OCI-LY7 (cell line): ENCODE measurements at regions of chr19 and their contacts with region 1.

Region 1: DNA sequence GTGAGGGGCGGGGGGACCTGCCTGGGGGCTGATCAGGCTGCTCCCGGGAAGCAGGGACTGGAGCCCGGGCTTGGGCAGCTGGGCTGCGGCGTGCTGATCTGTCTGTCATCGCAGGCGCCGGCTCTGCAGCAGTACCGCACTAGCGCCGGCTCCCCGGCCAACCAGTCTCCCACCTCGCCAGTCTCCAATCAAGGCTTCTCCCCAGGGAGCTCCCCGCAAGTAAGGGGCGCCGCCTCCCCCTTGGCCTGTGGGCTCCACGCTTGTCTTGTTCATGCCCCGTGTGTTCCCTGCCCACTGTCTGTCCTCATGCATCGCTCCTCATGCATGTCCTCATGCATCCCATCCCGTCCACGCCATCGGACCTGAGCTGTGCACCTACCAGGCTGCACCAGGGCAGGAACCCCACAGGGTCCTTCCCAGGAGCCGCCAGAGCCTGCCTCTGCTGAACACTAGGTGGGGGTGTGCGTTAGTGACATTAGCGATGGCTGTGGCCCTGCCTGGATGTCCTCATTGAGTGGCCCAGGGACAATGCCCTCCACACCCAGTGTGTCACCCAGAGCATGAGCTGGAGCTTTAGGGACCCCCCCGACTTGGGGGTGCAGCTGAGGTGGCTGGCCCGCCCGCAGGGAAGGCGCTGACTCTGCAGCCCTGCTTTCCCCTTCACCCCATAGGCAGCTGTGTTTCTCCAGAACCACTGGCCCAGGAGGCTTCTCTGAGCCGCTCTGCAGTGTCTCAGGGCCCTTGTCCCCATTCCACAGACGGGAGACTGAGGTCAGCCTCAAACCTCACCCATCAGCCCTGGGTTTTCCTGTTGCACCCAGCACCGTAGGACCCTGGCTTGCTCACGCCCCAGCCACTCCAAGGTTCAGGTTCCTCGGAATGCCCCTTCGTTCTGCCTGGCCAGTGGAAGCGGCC is 19.5 kb downstream of the COMP start:
- DNase-seq: peak; percentile 41
- H3K4me3 ChIP-seq: no peak overlapping the region
- H3K27ac ChIP-seq: no peak overlapping the region
- H3K4me1 ChIP-seq: no peaks in the 10 kb centered on the region
- CTCF ChIP-seq: peak; percentile 71

Region 2: GRCh38 chr19:18224525-18225354 is 546.8 kb before region 1 on chr19:
- CTCF ChIA-PET with region 1: no interaction called
- POLR2A ChIA-PET with region 1: no interaction called
- intact Hi-C with region 1: no loop called
- DNase-seq: peak; percentile 93
- H3K4me3 ChIP-seq: peak overlapping the region; percentile 66
- H3K27ac ChIP-seq: no peak overlapping the region
- H3K4me1 ChIP-seq: peaks cover 44% of the 10 kb centered on the region
- CTCF ChIP-seq: no peak

Region 3: DNA sequence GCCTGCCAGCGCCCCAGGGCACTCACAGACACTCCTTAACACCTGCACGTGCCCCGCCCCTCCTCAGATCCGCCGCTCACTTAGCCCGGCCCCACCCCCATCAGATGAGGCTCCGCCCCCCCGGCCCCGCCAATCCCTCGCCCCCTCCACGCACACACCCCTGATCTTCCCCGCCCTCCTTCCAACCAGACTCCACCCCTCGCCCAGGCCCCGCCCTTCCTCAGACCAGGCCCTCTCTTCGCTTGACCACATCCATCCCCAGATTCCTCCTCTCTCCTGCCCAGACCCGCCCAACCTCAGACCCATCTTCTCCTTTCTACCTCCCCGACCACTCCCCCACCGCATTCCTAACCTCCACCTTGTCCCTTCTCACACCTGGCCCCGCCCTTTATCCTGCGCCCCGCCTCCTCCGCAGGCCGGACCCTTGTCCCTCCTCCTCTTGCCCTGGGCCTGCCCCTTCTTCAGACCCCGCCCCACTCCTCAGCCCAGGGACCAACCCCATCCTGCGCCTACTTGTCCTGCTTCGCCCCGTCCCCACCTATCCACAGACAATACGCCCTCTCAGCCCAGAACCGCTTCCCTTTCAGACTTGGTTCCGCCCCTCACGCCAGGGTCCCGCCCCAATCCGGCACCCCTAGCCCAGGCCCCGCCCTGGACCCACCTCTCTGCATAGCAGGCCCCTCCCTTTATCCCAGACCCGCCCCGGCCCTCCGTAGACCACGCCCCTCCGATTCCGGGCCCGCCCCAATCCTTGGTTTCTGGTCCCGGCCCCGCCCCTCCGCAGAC is 135.2 kb before region 1 on chr19:
- CTCF ChIA-PET with region 1: no interaction called
- POLR2A ChIA-PET with region 1: no interaction called
- intact Hi-C with region 1: no loop called
- DNase-seq: peak; percentile 95
- H3K4me3 ChIP-seq: peak overlapping the region; percentile 73
- H3K27ac ChIP-seq: peak overlapping the region; percentile 17
- H3K4me1 ChIP-seq: peaks cover 19% of the 10 kb centered on the region
- CTCF ChIP-seq: no peak

Region 4: GRCh38 chr19:18846862-18847548 is 75.4 kb after region 1 on chr19:
- CTCF ChIA-PET with region 1: interaction called, 4 read pairs
- POLR2A ChIA-PET with region 1: no interaction called
- intact Hi-C with region 1: loop called (anchors 5 kb)
- DNase-seq: peak; percentile 72
- H3K4me3 ChIP-seq: no peak overlapping the region
- H3K27ac ChIP-seq: no peak overlapping the region
- H3K4me1 ChIP-seq: peaks cover 8% of the 10 kb centered on the region
- CTCF ChIP-seq: peak; percentile 91

Region 5: GRCh38 chr19:18932216-18932841 is 160.7 kb after region 1 on chr19:
- CTCF ChIA-PET with region 1: no interaction called
- POLR2A ChIA-PET with region 1: no interaction called
- intact Hi-C with region 1: no loop called
- DNase-seq: peak; percentile 85
- H3K4me3 ChIP-seq: peak overlapping the region; percentile 66
- H3K27ac ChIP-seq: no peak overlapping the region
- H3K4me1 ChIP-seq: peaks cover 9% of the 10 kb centered on the region
- CTCF ChIP-seq: no peak